Endothelial cell of umbilical vein (primary cell): ENCODE measurements at regions of chr3 and their contacts with region 1.

Region 1: GRCh38 chr3:12135029-12135657 is 23.6 kb downstream of the TIMP4 start:
- DNase-seq: peak; percentile 61
- H3K4me3 ChIP-seq: no peak overlapping the region
- H3K27ac ChIP-seq: no peak overlapping the region
- H3K4me1 ChIP-seq: no peaks in the 10 kb centered on the region
- H3K27me3 ChIP-seq: peaks cover 21 to 32% of the 10 kb centered on the region in 2 experiments
- CTCF ChIP-seq: peak; percentile 84 to 90
- POLR2A ChIP-seq: no peak

Region 2: GRCh38 chr3:11651900-11652299 is 483.2 kb before region 1 on chr3:
- CTCF ChIA-PET with region 1: no interaction called
- POLR2A ChIA-PET with region 1: no interaction called
- dilution Hi-C with region 1: no loop called
- intact Hi-C with region 1: loop called (anchors 10 kb)
- DNase-seq: peak; percentile 62
- H3K4me3 ChIP-seq: no peak overlapping the region
- H3K27ac ChIP-seq: no peak overlapping the region
- H3K4me1 ChIP-seq: peaks cover 3% of the 10 kb centered on the region
- H3K27me3 ChIP-seq: no peaks in the 10 kb centered on the region
- CTCF ChIP-seq: peak in 1 of 2 donors; percentile 16
- POLR2A ChIP-seq: no peak

Region 3: DNA sequence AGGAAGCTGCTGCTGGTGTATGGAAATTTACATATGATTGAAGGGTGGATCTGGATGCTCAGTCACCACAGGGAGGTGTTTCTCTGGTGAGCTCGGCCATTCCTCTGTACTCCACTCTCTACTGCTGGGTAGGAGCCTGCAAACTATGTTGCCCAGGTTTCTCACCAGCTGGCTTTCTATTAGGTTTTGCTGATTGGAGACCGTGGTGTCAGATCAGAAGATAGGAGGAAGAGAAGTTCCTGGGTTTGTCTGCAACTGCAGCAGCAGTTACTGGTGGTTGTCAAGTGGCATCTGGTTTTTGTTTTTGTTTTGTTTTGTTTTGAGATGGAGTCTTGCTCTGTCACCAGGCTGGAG is 350.1 kb before region 1 on chr3:
- CTCF ChIA-PET with region 1: no interaction called
- POLR2A ChIA-PET with region 1: no interaction called
- dilution Hi-C with region 1: no loop called
- intact Hi-C with region 1: no loop called
- DNase-seq: no peak
- H3K4me3 ChIP-seq: no peak overlapping the region
- H3K27ac ChIP-seq: no peak overlapping the region
- H3K4me1 ChIP-seq: no peaks in the 10 kb centered on the region
- H3K27me3 ChIP-seq: no peaks in the 10 kb centered on the region
- CTCF ChIP-seq: no peak
- POLR2A ChIP-seq: no peak

Region 4: DNA sequence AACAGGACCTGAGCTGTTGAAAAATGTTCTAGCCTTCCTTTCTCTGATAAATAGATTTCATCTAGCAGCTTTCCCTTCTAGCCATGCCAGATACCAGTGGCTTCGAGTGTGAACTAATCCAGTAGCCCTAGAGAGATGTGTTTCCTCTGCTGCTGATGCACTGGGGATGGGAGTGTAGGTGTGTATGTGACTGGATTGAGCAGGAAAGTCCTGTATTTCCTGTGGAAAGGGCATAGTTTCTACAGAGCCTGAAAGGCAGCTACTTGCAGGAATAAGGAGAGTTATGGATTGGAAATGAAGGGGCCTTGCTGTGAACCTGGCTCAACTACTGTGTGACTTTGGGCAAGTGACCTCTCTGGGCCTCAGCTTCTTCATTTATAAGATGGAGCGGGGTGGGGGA is 15.0 kb after region 1 on chr3:
- CTCF ChIA-PET with region 1: interaction called, 11 read pairs
- POLR2A ChIA-PET with region 1: no interaction called
- dilution Hi-C with region 1: no loop called
- intact Hi-C with region 1: no loop called
- DNase-seq: no peak
- H3K4me3 ChIP-seq: no peak overlapping the region
- H3K27ac ChIP-seq: no peak overlapping the region
- H3K4me1 ChIP-seq: no peaks in the 10 kb centered on the region
- H3K27me3 ChIP-seq: peaks cover 0 to 5% of the 10 kb centered on the region in 2 experiments
- CTCF ChIP-seq: no peak
- POLR2A ChIP-seq: no peak

Region 5: DNA sequence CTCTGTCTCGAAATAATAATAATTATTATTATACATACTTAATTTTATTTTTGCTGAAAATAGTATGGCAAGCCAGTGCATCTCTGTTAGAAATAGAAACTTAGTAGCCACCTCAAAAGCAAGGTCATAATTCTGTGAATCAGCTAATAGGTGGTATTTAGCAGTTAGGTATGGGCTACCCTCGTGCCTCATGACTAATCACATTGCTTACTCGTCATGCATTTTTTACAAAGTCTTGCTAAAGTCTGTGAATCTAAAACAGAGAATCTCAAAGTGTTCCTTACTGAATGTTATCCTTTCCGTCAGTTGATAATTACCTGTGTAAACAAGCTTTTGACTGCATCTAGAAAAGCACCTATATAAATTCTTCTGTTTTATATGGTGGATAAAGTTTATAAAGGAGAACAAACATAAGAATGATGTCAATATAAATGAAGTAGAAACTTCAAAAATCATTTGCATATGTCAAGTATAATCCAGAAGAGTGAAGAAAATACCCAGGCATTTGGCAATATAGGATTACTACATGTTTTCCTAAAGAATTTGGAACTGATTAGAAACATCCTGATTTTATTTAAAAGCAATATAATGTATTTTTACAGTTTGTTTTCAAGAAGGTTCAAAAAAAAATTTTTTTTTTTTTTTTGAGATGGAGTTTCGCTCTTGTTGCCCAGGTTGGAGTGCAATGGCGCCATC is 159.9 kb after region 1 on chr3:
- CTCF ChIA-PET with region 1: interaction called, 3 read pairs
- POLR2A ChIA-PET with region 1: no interaction called
- dilution Hi-C with region 1: no loop called
- intact Hi-C with region 1: loop called (anchors 5 kb)
- DNase-seq: no peak
- H3K4me3 ChIP-seq: no peak overlapping the region
- H3K27ac ChIP-seq: no peak overlapping the region
- H3K4me1 ChIP-seq: no peaks in the 10 kb centered on the region
- H3K27me3 ChIP-seq: peaks cover 3 to 4% of the 10 kb centered on the region in 2 experiments
- CTCF ChIP-seq: no peak
- POLR2A ChIP-seq: no peak

Region 6: GRCh38 chr3:12405432-12406272 is 270.5 kb after region 1 on chr3:
- CTCF ChIA-PET with region 1: interaction called, 3 read pairs
- POLR2A ChIA-PET with region 1: no interaction called
- dilution Hi-C with region 1: no loop called
- intact Hi-C with region 1: loop called (anchors 5 kb)
- DNase-seq: peak; percentile 98
- H3K4me3 ChIP-seq: peak overlapping the region in 1 of 3 experiments; percentile 10
- H3K27ac ChIP-seq: peak overlapping the region; percentile 61
- H3K4me1 ChIP-seq: peaks cover 24% of the 10 kb centered on the region
- H3K27me3 ChIP-seq: no peaks in the 10 kb centered on the region
- CTCF ChIP-seq: no peak
- POLR2A ChIP-seq: no peak

Region 7: GRCh38 chr3:12556671-12557472 is 421.7 kb after region 1 on chr3 and contains the start of gene MKRN2:
- CTCF ChIA-PET with region 1: no interaction called
- POLR2A ChIA-PET with region 1: no interaction called
- dilution Hi-C with region 1: no loop called
- intact Hi-C with region 1: loop called (anchors 5 kb)
- DNase-seq: peak; percentile 89
- H3K4me3 ChIP-seq: peak within 1 kb of the TSS; percentile 86 to 98 (median 89)
- H3K27ac ChIP-seq: peak within 1 kb of the TSS; percentile 56
- H3K4me1 ChIP-seq: peaks cover 21% of the 10 kb centered on the region
- H3K27me3 ChIP-seq: no peaks in the 10 kb centered on the region
- CTCF ChIP-seq: no peak
- POLR2A ChIP-seq: peak; percentile 98
- total RNA-seq, gene MKRN2: 26.4 and 27.3 TPM in 2 replicates